ENCODE measurements at regions of chr5 and their contacts with region 1.

Region 1: DNA sequence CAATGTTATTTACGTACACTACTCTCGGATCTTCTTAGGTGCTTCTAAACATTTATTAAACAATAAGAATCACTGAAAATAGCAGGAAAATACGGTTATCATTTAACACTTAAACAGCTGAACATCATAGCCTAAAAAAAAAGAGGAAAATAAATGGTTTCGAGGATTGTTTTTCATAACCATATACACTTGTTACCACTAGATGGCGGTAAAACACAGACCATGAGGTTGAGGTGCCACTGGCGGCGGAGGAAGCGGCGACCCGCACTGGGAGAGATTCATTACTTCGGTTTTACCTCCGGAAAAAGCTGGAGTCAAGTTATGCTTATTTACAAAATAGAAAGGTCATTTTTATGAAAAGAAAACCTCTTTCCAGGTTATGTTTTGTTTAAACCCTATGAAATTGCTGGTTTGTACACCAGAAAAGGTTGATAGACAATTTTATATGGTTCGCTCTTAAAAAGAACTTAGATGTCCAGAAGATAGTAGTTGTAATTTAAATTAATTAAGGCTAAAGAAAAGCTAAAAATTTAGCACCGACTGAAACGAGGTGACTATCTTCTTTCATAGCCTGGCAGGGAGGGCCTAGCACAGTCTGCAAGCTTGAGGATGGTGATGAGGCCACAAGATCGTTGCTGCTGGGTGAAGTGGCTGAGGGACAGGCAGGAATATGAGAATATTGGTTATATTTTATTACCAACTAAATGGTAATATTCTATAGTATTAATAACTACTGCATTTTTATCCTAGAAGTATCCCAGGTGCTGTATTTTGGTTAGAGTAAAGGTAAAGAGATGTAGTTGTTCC is 605.7 kb downstream of the RAB3C start:
- DNase-seq: peak; percentile 59 to 73 (median 69)
- ATAC-seq: peak; percentile 82
- H3K4me3 ChIP-seq: no peak overlapping the region
- H3K27ac ChIP-seq: no peak overlapping the region
- H3K4me1 ChIP-seq: no peaks in the 10 kb centered on the region
- H3K27me3 ChIP-seq: no peaks in the 10 kb centered on the region
- CTCF ChIP-seq: peak; percentile 69 to 81 (median 78)
- EP300 ChIP-seq: no peak
- POLR2A ChIP-seq: no peak
- RAD21 ChIP-seq: peak; percentile 62 to 79

Region 2: DNA sequence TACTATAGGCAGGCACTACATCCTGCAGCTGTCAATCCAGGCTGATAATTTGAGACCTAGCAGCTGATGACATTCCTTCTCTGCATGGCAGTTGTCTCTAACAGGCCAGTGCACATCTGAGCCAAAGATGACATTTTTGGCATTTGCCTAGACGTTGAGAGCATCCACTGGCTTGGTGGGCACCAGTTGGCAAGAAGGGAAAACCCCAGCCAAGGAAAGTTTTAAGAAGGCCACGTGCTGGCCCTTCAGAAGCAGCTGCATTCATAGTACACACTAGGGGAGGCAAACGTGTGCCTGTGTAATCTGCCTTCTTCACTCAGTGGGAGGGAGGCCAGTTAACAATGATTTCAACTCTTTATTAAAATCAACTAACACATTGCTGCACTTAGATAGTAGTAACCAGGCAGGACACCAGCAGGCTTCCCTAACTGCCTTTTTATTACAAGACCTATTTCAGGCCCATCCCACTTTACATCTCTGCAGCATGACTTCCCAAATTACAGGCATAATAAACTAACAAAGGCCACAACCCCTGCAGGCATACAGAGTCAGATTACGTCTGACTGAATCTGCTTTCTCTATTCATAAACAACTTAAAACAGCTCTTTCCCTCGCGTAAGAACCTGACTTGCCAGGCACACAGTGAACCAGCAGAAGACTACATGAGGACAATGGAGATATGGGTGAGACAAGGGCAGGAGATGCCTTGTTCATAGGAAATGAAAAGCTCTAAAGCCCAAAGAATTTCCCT is 128.6 kb after region 1 on chr5:
- CTCF ChIA-PET with region 1: no interaction called
- POLR2A ChIA-PET with region 1: no interaction called
- in situ Hi-C with region 1: no loop called
- intact Hi-C with region 1: no loop called
- DNase-seq: no peak
- ATAC-seq: no peak
- H3K4me3 ChIP-seq: no peak overlapping the region
- H3K27ac ChIP-seq: no peak overlapping the region
- H3K4me1 ChIP-seq: no peaks in the 10 kb centered on the region
- H3K27me3 ChIP-seq: no peaks in the 10 kb centered on the region
- CTCF ChIP-seq: no peak
- EP300 ChIP-seq: no peak
- POLR2A ChIP-seq: no peak
- RAD21 ChIP-seq: no peak

Region 3: DNA sequence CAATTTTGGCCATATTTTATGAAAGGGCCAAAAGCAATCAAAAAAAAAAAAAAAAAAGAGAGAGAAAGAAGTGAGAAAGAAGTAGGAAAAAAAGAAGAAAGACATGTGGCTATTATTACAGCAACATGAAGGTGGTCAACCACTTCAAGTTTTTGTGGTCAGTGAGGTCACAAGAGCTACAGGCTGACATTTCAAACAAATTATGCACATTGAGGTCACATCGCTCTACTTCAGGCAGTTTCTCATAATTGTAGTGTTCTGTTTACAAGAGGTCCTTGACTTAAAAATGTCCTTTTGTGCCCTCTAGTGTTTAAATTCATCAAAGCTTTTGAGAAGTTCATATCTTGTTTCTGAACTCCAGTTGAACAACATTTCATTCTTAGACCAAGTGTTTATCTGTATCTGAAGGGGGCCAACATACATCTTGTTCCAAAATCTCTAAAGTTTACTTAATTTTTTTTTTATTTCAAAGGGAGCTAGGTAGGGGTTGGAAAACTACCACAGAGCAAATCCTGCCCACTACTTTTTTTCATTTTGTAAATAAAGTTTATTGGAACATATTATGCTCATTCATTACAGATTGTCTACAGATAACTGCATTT is 191.8 kb after region 1 on chr5:
- CTCF ChIA-PET with region 1: interaction called, 6 read pairs
- POLR2A ChIA-PET with region 1: no interaction called
- in situ Hi-C with region 1: no loop called
- intact Hi-C with region 1: loop called (anchors 2 kb)
- DNase-seq: peak in 2 of 4 experiments; percentile 7 to 13
- ATAC-seq: no peak; the same call in 2 of the 3 replicates
- H3K4me3 ChIP-seq: no peak overlapping the region
- H3K27ac ChIP-seq: no peak overlapping the region
- H3K4me1 ChIP-seq: no peaks in the 10 kb centered on the region
- H3K27me3 ChIP-seq: no peaks in the 10 kb centered on the region
- CTCF ChIP-seq: peak in 1 of 3 experiments; percentile 32; a peak in 2 of 6 replicates
- EP300 ChIP-seq: no peak
- POLR2A ChIP-seq: no peak
- RAD21 ChIP-seq: peak in 1 of 2 experiments; percentile 46; a peak in 3 of 4 replicates

Region 4: DNA sequence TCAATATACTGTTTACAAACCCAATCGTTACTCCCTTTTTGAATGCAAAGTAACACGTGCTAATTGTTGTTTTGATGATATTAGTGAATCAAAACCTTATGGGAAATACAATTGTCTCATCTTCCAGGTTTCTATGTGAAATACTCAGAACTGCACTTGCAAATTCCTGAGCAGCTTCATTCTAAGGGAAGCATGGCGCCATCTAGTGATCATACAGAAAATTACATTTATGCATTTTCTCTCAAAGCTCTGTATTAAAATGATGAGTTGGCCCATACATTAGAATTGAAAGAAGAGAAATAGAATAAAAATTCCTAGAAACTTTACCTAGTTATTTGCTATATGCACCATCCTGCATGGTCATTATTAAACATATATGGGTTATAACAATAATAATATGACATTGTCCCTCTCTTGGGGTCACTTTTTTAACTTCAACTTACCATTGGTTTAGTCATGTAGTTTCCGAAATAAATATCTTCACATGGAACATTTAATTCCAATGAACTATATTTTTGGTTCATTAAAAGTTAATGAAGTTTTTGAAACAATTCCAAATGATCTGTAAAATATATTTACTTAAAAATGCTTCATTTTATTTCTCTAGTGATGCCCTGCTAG is 484.9 kb after region 1 on chr5:
- CTCF ChIA-PET with region 1: no interaction called
- POLR2A ChIA-PET with region 1: no interaction called
- in situ Hi-C with region 1: loop called (anchors 10 kb)
- intact Hi-C with region 1: loop called (anchors 1 kb)
- DNase-seq: peak; percentile 10 to 42 (median 25)
- ATAC-seq: no peak; the same call in 2 of the 3 replicates
- H3K4me3 ChIP-seq: no peak overlapping the region
- H3K27ac ChIP-seq: no peak overlapping the region
- H3K4me1 ChIP-seq: no peaks in the 10 kb centered on the region
- H3K27me3 ChIP-seq: no peaks in the 10 kb centered on the region
- CTCF ChIP-seq: peak; percentile 38 to 70 (median 52); a peak in 5 of 6 replicates
- EP300 ChIP-seq: no peak
- POLR2A ChIP-seq: no peak
- RAD21 ChIP-seq: peak; percentile 59 to 71

Region 5: DNA sequence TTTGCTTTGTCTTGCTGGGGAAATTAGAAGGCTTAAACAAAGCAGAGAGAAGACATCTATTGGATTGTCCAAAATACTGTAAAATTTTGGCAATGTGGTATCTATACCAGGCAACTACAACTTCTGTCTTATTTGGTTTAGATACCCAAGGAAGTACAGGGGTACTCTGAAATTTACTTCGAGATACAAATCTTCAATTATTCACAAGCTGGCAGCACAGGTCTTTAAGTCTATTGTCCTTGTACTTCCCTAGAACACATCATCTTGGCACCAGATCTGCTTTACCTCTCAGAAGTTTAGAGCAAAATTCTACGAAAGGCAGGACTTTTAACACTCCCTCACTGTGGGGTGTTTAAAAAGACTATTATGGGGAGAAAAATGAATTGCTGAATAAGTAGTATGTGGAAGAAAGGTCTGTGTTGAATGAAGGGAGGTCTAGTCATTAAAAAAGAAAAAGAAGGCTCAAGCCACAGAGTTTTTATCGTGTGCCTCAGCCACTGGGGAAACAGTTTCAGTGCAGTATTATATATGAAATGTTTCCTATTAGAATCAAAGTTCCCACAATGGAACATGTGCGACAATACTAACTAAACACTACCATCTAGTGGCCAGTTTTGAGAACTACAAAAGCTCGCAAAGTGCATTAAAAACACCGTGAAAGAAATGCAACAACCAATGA is 611.2 kb after region 1 on chr5:
- CTCF ChIA-PET with region 1: interaction called, 4 read pairs
- POLR2A ChIA-PET with region 1: no interaction called
- in situ Hi-C with region 1: loop called (anchors 10 kb)
- intact Hi-C with region 1: loop called (anchors 1 kb)
- DNase-seq: peak; percentile 22 to 50 (median 24)
- ATAC-seq: peak; percentile 76
- H3K4me3 ChIP-seq: no peak overlapping the region
- H3K27ac ChIP-seq: no peak overlapping the region
- H3K4me1 ChIP-seq: no peaks in the 10 kb centered on the region
- H3K27me3 ChIP-seq: no peaks in the 10 kb centered on the region
- CTCF ChIP-seq: peak; percentile 42 to 78 (median 51); a peak in 4 of 6 replicates
- EP300 ChIP-seq: no peak
- POLR2A ChIP-seq: no peak
- RAD21 ChIP-seq: peak; percentile 68 to 78

Measured in K562 (cell line).